Adrenal gland (tissue), 19 donors: ENCODE measurements at regions of chr13 and their contacts with region 1.

Region 1: GRCh38 chr13:98672944-98673545 is 79.4 kb downstream of the SLC15A1 start:
- DNase-seq: peak; percentile 56 to 86 (median 76)
- H3K4me3 ChIP-seq: no peak overlapping the region
- H3K27ac ChIP-seq: no peak overlapping the region
- H3K4me1 ChIP-seq: peaks cover 0 to 3% of the 10 kb centered on the region in 2 donors
- H3K27me3 ChIP-seq: no peaks in the 10 kb centered on the region
- CTCF ChIP-seq: peak; percentile 77 to 88 (median 82)
- POLR2A ChIP-seq: no peak

Region 2: GRCh38 chr13:97855570-97856303 is 817.3 kb before region 1 on chr13:
- intact Hi-C with region 1: loop called in 1 of 2 experiments (anchors 10 kb)
- DNase-seq: peak; percentile 46 to 81 (median 52)
- H3K4me3 ChIP-seq: no peak overlapping the region
- H3K27ac ChIP-seq: peak overlapping the region in 2 of 5 donors; percentile 10 to 49
- H3K4me1 ChIP-seq: peaks cover 0 to 15% of the 10 kb centered on the region in 2 donors
- H3K27me3 ChIP-seq: no peaks in the 10 kb centered on the region
- CTCF ChIP-seq: peak; percentile 57 to 89 (median 79)
- POLR2A ChIP-seq: no peak

Region 3: DNA sequence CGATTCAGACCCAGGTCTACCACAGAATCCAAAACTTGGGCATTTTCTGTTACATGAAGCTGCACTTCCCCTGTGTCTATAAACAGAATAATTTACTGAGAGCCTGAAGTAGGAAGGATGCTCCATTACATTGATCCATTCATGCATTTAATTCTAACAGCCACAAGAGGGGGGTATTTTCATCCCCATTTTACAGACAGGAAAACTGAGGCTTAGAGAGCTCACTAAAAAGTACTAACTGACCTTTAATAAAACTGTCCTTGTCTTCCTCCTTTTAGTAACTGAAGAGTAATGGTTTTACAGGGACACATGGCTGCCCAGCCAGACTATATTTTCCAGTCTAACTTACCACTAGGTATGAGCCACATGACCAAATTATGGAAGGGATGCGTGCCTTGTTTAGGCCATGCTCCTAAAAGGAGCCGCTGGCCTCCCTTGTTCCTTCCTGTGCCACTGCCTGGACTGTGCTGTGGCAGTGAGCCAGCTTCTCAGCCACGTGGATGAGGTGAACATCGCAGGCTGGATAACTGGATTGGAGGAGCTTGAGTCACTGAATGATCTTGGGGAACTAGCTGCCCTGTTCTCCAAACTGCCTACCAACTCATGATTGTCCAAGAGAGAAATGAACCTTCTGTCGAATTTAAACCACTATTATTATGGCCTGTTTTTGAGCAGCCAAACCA is 196.5 kb after region 1 on chr13:
- intact Hi-C with region 1: no loop called
- DNase-seq: peak; percentile 28 to 76 (median 68)
- H3K4me3 ChIP-seq: no peak overlapping the region
- H3K27ac ChIP-seq: no peak overlapping the region
- H3K4me1 ChIP-seq: no peaks in the 10 kb centered on the region
- H3K27me3 ChIP-seq: no peaks in the 10 kb centered on the region
- CTCF ChIP-seq: peak in 1 of 6 experiments; percentile 18
- POLR2A ChIP-seq: no peak